WTC11 (cell line): ENCODE measurements at regions of chr12 and their contacts with region 1.

Region 1: GRCh38 chr12:53213348-53213747 is 6.3 kb upstream of the ITGB7 start:
- DNase-seq: peak; percentile 93
- ATAC-seq: peak; percentile 59
- H3K4me3 Mint-ChIP-seq: 0 out of 2 replicates have a peak overlapping the region, but pooled peaks have one; percentile 2
- H3K27ac Mint-ChIP-seq: peak overlapping the region; percentile 63; the same call in 1 of the 2 replicates
- H3K4me1 Mint-ChIP-seq: peaks cover 57% of the 10 kb centered on the region
- H3K27me3 Mint-ChIP-seq: no peaks in the 10 kb centered on the region
- CTCF ChIP-seq: peak; percentile 97

Region 2: GRCh38 chr12:53098982-53099651 is 114.2 kb before region 1 on chr12:
- CTCF ChIA-PET with region 1: interaction called, 10 read pairs
- POLR2A ChIA-PET with region 1: interaction called, 3 read pairs
- DNase-seq: peak; percentile 92
- ATAC-seq: peak; percentile 16
- H3K4me3 Mint-ChIP-seq: peak overlapping the region; percentile 90
- H3K27ac Mint-ChIP-seq: no peak overlapping the region
- H3K4me1 Mint-ChIP-seq: peaks cover 30% of the 10 kb centered on the region
- H3K27me3 Mint-ChIP-seq: peaks cover 54% of the 10 kb centered on the region
- CTCF ChIP-seq: peak; percentile 96

Region 3: DNA sequence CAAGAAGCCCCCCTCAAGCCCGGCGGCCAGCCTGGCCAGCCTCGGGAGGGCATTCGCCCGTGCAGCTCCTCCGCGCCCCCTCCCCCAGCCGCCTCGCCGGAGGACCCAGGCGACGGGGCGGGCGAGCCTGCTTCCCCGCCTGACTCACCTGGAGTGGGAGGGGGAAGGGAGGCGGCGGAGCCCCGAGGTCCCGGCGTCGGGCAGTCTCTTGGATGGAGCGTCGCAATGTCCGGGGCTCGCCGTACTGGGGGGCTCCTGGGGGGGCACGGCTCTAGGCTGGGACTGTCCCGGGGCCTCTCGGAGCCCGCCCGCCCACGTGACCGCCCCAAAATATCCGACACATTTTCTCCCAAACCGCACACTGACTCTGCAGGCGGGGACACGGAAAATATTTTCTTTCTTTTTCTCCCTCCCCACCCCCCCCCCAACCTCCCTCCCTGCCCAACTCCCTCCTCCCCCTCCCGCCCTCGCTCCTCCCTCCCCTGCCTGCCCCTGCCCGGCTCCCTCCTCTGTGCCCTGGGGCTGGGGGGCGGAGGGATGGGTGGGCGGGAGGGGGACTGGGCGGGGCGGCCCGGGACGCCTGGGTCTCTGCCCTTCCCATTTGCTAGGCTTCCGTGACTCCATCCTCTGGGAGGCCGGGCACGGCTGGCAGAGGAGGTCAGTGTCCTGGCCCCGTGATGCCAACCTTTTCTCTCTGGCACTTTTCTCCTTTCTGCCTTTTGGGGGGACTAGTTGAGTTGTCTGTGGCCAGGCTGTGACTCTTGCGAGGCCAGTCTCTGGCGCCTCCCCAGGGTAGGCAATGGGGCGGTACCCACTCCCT is 18.7 kb after region 1 on chr12 and contains the start of gene RARG:
- CTCF ChIA-PET with region 1: interaction called, 82 read pairs
- POLR2A ChIA-PET with region 1: interaction called, 5 read pairs
- DNase-seq: peak; percentile 57
- ATAC-seq: peak; percentile 43
- H3K4me3 Mint-ChIP-seq: peak within 1 kb of the TSS; percentile 82
- H3K27ac Mint-ChIP-seq: peak within 1 kb of the TSS; percentile 88
- H3K4me1 Mint-ChIP-seq: peaks cover 77% of the 10 kb centered on the region
- H3K27me3 Mint-ChIP-seq: peaks cover 5% of the 10 kb centered on the region; the same call in 1 of the 2 replicates
- CTCF ChIP-seq: no peak
- total RNA-seq, gene RARG: 68.1 to 77.2 TPM (median 69.7 TPM) in 3 replicates

Region 4: GRCh38 chr12:53251477-53252348 is 38.4 kb after region 1 on chr12:
- CTCF ChIA-PET with region 1: interaction called, 188 read pairs
- POLR2A ChIA-PET with region 1: interaction called, 4 read pairs
- DNase-seq: peak; percentile 86
- ATAC-seq: peak; percentile 87
- H3K4me3 Mint-ChIP-seq: peak overlapping the region; percentile 93
- H3K27ac Mint-ChIP-seq: peak overlapping the region; percentile 94
- H3K4me1 Mint-ChIP-seq: peaks cover 25% of the 10 kb centered on the region
- H3K27me3 Mint-ChIP-seq: no peaks in the 10 kb centered on the region
- CTCF ChIP-seq: no peak

Region 5: DNA sequence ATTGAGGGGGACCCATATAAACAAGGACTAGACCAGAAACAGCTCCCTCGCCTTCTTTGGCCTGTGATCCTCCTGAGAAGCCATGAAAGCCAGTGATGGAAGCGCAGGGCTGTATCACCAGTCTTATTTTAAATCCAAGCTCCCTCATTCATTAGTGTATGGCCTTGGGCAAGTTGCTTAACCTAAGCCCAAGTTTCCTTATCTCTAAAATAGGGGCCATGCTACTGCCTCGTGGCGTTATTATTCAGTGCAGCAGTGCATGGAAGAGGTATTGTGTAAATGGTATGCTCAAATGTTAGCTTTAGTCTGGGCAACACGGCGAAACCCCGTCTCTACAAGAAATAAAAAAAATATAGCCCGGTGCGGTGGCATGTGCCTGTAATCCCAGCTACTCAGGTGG is 64.6 kb after region 1 on chr12:
- CTCF ChIA-PET with region 1: interaction called, 333 read pairs
- POLR2A ChIA-PET with region 1: no interaction called
- DNase-seq: no peak
- ATAC-seq: no peak
- H3K4me3 Mint-ChIP-seq: no peak overlapping the region
- H3K27ac Mint-ChIP-seq: no peak overlapping the region
- H3K4me1 Mint-ChIP-seq: no peaks in the 10 kb centered on the region
- H3K27me3 Mint-ChIP-seq: no peaks in the 10 kb centered on the region
- CTCF ChIP-seq: no peak